PC-9 (cell line): ENCODE measurements at regions of chr1 and their contacts with region 1.

Region 1: DNA sequence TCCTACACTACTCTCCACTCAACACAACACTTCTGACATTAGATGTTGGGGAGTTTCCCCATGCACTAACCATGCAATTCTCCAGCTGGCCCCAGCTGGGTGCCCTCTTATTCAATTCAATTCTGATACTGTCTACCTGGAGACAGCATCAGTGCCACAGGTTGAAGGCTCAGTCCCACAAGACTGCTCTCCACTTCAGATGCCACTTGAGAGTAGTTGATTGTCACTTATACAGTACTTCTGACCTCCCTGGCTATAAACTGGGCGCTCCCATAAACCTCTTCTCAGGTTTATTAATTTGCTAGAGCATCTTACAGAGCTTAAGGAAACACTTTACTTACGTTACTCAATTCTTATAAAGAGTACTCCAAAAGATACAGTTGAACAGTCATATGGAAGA is 442.3 kb downstream of the LRRIQ3 start:
- DNase-seq: no peak
- H3K4me3 ChIP-seq: no peak overlapping the region
- H3K27ac ChIP-seq: no peak overlapping the region
- H3K4me1 ChIP-seq: no peaks in the 10 kb centered on the region
- H3K27me3 ChIP-seq: no peaks in the 10 kb centered on the region
- CTCF ChIP-seq: no peak

Region 2: GRCh38 chr1:73701826-73702225 is 53.8 kb before region 1 on chr1:
- CTCF ChIA-PET with region 1: no interaction called
- POLR2A ChIA-PET with region 1: no interaction called
- intact Hi-C with region 1: loop called (anchors 10 kb)
- DNase-seq: no peak
- H3K4me3 ChIP-seq: no peak overlapping the region
- H3K27ac ChIP-seq: no peak overlapping the region
- H3K4me1 ChIP-seq: no peaks in the 10 kb centered on the region
- H3K27me3 ChIP-seq: no peaks in the 10 kb centered on the region
- CTCF ChIP-seq: no peak